Gastrocnemius medialis (tissue), 4 donors: ENCODE measurements at regions of chr12 and their contacts with region 1.

Region 1: DNA sequence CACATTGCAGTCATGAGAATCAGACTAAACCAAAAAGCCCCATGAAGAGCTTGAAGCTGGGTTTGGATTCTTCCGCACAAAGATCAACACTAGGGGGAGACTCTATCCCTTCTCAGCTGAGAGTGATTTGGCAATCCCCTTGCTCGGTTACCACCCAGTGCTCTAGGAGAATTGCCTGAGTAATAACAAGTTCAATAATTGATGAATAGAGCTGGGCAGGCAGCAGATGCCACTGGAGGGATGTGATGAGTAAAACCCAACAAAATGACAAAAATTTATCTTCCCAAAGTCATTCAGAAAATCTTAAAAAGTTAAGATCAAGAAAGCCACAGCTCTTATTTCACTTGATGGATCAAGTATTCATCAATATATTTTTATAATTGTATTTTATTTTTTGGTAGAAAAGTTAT is 185.6 kb upstream of the ARID2 start:
- DNase-seq: peak; percentile 13 to 15
- ATAC-seq: peak; percentile 89 to 94
- H3K4me3 ChIP-seq: no peak overlapping the region
- H3K27ac ChIP-seq: no peak overlapping the region
- H3K4me1 ChIP-seq: no peaks in the 10 kb centered on the region
- H3K27me3 ChIP-seq: no peaks in the 10 kb centered on the region
- CTCF ChIP-seq: peak; percentile 47 to 81 (median 68)
- POLR2A ChIP-seq: no peak

Region 2: DNA sequence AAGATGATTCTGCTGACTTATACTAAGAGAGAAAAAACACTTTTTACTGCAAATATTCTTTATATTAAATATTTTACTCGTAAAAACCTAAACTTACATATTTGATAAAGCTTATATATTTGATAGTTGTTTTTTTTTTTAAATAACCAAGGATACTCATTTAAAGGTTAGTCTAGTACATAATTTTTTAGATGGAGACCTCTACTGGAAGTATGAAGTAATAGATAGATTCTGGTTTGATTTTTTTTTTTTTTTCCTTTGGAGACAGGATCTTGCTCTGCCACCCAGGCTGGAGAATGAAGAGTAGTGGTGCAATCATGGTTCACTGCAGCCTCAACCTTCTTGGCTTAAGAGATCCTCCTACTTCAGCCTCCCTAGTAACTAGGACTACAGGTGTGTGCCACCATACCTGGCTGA is 202.0 kb after region 1 on chr12:
- in situ Hi-C with region 1: loop called in 1 of 4 experiments (anchors 5 kb)
- intact Hi-C with region 1: no loop called
- DNase-seq: no peak
- ATAC-seq: peak in 1 of 2 donors; percentile 33
- H3K4me3 ChIP-seq: no peak overlapping the region
- H3K27ac ChIP-seq: no peak overlapping the region
- H3K4me1 ChIP-seq: peaks cover 11 to 12% of the 10 kb centered on the region in 2 donors
- H3K27me3 ChIP-seq: no peaks in the 10 kb centered on the region
- CTCF ChIP-seq: peak in 2 of 5 experiments; percentile 14 to 33
- POLR2A ChIP-seq: no peak

Region 3: GRCh38 chr12:45852508-45852907 is 308.6 kb after region 1 on chr12:
- in situ Hi-C with region 1: loop called in 1 of 4 experiments (anchors 25 kb)
- intact Hi-C with region 1: no loop called
- DNase-seq: no peak
- ATAC-seq: no peak
- H3K4me3 ChIP-seq: no peak overlapping the region
- H3K27ac ChIP-seq: no peak overlapping the region
- H3K4me1 ChIP-seq: peaks cover 0 to 14% of the 10 kb centered on the region in 2 donors
- H3K27me3 ChIP-seq: no peaks in the 10 kb centered on the region
- CTCF ChIP-seq: no peak
- POLR2A ChIP-seq: no peak

Region 4: GRCh38 chr12:46005151-46005797 is 461.4 kb after region 1 on chr12:
- in situ Hi-C with region 1: no loop called
- intact Hi-C with region 1: loop called (anchors 10 kb)
- DNase-seq: no peak
- ATAC-seq: no peak
- H3K4me3 ChIP-seq: no peak overlapping the region
- H3K27ac ChIP-seq: no peak overlapping the region
- H3K4me1 ChIP-seq: no peaks in the 10 kb centered on the region
- H3K27me3 ChIP-seq: no peaks in the 10 kb centered on the region
- CTCF ChIP-seq: peak in 3 of 5 experiments; percentile 18 to 40 (median 22)
- POLR2A ChIP-seq: no peak